ENCODE measurements at regions of chr11 and their contacts with region 1.

Region 1: DNA sequence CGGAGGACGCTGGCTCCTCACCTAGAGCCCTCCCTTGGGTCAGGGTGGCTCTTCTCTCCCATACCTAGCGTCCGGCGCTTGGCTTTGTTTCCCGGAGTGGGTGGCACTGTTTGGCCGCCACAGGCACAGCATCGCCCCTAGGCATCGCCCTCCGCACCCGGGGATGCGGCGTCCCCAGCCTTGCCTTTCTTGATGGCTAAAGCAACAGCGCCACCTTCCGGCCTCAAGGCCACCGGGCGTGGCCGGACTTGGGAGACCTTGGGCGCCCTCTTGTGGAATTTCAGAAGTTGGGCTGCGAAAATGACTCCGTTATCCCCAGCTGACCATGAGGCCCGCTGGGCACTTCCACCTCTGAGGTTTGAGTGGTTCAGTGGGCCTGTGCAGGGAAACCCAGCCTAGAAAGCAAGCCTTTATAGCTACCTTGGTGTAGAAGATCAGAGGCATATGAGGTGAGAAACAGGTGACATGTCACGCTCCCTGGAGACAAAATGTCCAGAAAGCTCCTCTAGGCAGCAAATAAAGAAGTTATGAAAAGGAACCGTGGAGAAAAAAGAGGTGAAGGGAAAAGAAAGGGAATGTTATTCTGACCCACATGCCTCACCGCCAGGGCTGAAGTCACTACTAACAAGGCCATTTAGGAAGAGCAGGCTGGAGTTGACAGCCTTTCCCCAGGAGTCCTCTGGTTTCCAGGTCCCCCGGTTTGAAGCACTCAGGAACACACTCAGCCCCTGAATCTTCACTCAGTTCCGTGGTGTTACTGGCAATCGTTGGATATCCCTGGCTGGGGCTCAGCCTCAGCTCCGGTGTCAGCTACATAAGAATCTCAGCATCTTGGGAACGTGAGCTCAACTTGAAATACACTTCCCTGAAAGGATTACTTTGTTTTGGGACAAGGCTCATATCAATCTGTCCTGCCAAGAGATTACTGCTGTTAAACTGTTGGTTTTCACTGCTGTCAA is 54.1 kb downstream of the SNX19 start:
- DNase-seq: peak; percentile 94 to 96 (median 94)
- H3K4me3 ChIP-seq: no peak overlapping the region
- H3K27ac ChIP-seq: no peak overlapping the region
- H3K4me1 ChIP-seq: peaks cover 0 to 2% (median 0%) of the 10 kb centered on the region in 4 experiments
- H3K27me3 ChIP-seq: no peaks in the 10 kb centered on the region

Region 2: DNA sequence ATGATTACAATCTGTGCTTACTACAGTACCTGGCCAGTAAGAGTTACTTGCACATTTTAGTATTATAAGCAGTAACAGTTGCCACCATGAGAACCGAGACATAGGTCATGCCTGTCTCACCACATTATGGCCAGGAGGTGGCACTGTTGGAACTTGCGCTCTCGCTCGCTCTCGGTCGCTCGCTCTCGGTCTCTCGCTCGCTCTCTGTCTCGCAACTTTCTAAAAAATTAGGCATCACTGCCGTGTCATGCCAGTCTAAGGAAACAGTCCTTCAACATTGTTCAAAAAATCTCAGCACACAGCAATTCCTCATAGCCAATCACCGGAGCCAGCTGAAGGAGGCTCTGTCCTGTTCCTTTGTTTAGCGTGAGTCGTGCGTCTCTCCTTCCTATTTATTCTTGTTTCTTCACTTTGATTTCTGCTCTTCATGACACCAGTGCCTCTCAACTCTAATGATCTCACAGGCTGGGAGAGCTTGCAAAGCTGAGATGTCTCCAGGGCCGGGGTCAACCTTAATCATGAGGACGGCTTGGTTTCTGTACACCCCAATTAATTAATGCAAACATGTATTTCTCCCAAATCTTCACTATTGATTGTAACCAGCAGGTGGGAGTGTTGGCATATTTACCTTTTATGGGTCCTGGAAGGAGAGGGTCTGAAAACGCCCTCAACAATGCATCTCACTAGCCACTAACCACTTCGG is 427.5 kb before region 1 on chr11:
- CTCF ChIA-PET with region 1: interaction called, 362 read pairs
- POLR2A ChIA-PET with region 1: no interaction called
- DNase-seq: peak; percentile 76 to 86 (median 84)
- H3K4me3 ChIP-seq: peak overlapping the region; percentile 40 to 94 (median 81)
- H3K27ac ChIP-seq: no peak overlapping the region
- H3K4me1 ChIP-seq: peaks cover 1 to 20% (median 11%) of the 10 kb centered on the region in 4 experiments
- H3K27me3 ChIP-seq: peaks cover 4 to 16% (median 8%) of the 10 kb centered on the region in 5 experiments

Region 3: GRCh38 chr11:130442737-130443136 is 419.4 kb before region 1 on chr11:
- CTCF ChIA-PET with region 1: interaction called, 362 read pairs
- POLR2A ChIA-PET with region 1: no interaction called
- DNase-seq: no peak
- H3K4me3 ChIP-seq: no peak overlapping the region
- H3K27ac ChIP-seq: no peak overlapping the region
- H3K4me1 ChIP-seq: peaks cover 0 to 15% (median 7%) of the 10 kb centered on the region in 4 experiments
- H3K27me3 ChIP-seq: peaks cover 0 to 21% (median 6%) of the 10 kb centered on the region in 5 experiments

Region 4: DNA sequence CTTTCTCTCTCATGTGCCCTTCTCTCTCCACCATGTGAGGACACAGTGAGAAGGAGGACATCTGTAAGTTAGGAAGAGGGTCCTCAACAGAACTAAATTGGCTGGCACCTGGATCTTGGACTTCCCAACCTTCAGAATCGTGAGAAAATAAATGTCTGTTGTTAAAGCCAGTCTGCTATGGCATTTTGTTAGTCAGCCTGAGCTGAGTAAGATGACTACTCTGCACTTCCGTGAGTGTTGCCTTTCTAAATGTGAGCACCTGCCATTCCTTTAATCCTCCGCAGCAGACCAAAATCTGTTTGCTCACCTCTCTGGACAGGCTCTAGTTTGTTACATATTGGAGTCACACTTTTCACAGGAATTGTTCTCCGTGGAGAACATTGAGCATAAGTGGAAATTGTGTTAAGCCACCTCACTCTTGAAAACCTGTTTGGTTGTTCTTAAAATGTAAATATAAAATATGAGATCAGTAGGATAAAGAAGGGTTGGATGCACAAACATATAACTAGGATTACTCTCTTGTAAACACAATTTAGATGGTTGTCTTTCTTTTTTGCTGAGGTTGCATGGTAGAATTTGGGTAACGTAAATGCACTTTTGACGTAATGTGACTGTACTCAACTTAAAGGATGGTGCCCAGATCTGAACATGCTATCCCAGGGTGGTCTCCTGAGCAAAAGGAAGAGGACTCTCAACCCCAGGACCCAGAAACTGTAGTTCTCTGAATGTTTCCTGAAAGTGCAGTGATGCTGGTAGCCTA is 11.8 kb before region 1 on chr11:
- CTCF ChIA-PET with region 1: interaction called, 19 read pairs
- POLR2A ChIA-PET with region 1: no interaction called
- DNase-seq: no peak
- H3K4me3 ChIP-seq: no peak overlapping the region
- H3K27ac ChIP-seq: no peak overlapping the region
- H3K4me1 ChIP-seq: no peaks in the 10 kb centered on the region
- H3K27me3 ChIP-seq: peaks cover 0 to 5% (median 0%) of the 10 kb centered on the region in 5 experiments

Region 5: GRCh38 chr11:130872981-130873380 is 10.8 kb after region 1 on chr11:
- CTCF ChIA-PET with region 1: interaction called, 64 read pairs
- POLR2A ChIA-PET with region 1: no interaction called
- DNase-seq: no peak
- H3K4me3 ChIP-seq: no peak overlapping the region
- H3K27ac ChIP-seq: no peak overlapping the region
- H3K4me1 ChIP-seq: no peaks in the 10 kb centered on the region
- H3K27me3 ChIP-seq: no peaks in the 10 kb centered on the region

Region 6: GRCh38 chr11:130894322-130895025 is 32.3 kb after region 1 on chr11:
- CTCF ChIA-PET with region 1: interaction called, 11 read pairs
- POLR2A ChIA-PET with region 1: no interaction called
- DNase-seq: peak; percentile 55 to 81 (median 78)
- H3K4me3 ChIP-seq: no peak overlapping the region
- H3K27ac ChIP-seq: no peak overlapping the region
- H3K4me1 ChIP-seq: no peaks in the 10 kb centered on the region
- H3K27me3 ChIP-seq: no peaks in the 10 kb centered on the region

Measured in common myeloid progenitor, CD34-positive (primary cell).